ENCODE measurements at regions of chr9 and their contacts with region 1.

Region 1: GRCh38 chr9:100028201-100028784 is 70.5 kb downstream of the ERP44 start:
- DNase-seq: peak; percentile 80 to 81
- ATAC-seq: peak; percentile 92
- H3K4me3 ChIP-seq: no peak overlapping the region
- H3K27ac ChIP-seq: no peak overlapping the region
- H3K4me1 ChIP-seq: no peaks in the 10 kb centered on the region
- H3K27me3 ChIP-seq: no peaks in the 10 kb centered on the region

Region 2: GRCh38 chr9:99954819-99955218 is 73.5 kb before region 1 on chr9:
- intact Hi-C with region 1: no loop called
- DNase-seq: no peak
- ATAC-seq: no peak
- H3K4me3 ChIP-seq: no peak overlapping the region
- H3K27ac ChIP-seq: no peak overlapping the region
- H3K4me1 ChIP-seq: no peaks in the 10 kb centered on the region
- H3K27me3 ChIP-seq: no peaks in the 10 kb centered on the region

Region 3: DNA sequence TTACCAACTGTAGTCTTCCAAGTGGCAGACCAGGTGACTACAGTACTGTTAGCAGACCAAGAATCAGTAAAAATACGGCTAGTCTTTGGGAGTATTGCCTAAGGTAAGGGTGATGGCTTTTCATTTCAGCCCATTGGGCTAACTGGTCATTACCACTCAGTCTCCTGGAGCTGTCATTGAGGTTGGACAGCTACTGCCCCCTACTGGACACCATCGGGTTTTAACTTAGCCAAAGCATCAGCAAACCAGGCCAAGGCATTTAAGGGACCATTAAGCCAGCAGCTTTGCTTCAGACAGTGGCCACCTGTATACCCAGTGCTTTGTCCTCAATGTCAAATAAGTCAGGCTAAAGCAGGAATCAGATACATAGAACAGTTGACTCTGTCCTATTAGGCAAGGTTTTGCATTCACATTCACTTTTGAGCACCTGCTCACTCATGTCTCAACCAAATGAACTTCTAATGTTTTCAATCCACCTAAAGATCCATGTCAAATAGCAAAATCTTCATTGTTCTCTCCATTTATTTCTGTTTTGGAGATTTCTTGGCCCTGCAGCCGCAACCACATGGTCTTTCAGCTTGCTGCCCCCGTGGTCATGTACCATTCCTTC is 188.0 kb after region 1 on chr9:
- intact Hi-C with region 1: loop called in 1 of 2 experiments (anchors 10 kb)
- DNase-seq: peak in 1 of 2 donors; percentile 53
- ATAC-seq: peak; percentile 57
- H3K4me3 ChIP-seq: no peak overlapping the region
- H3K27ac ChIP-seq: no peak overlapping the region
- H3K4me1 ChIP-seq: peaks cover 0 to 1% of the 10 kb centered on the region in 2 donors
- H3K27me3 ChIP-seq: no peaks in the 10 kb centered on the region

Region 4: GRCh38 chr9:100322954-100323536 is 294.8 kb after region 1 on chr9:
- intact Hi-C with region 1: loop called in 1 of 2 experiments (anchors 10 kb)
- DNase-seq: no peak
- ATAC-seq: no peak
- H3K4me3 ChIP-seq: no peak overlapping the region
- H3K27ac ChIP-seq: no peak overlapping the region
- H3K4me1 ChIP-seq: no peaks in the 10 kb centered on the region
- H3K27me3 ChIP-seq: no peaks in the 10 kb centered on the region